AG04450 (cell line): ENCODE measurements at regions of chr4 and their contacts with region 1.

Region 1: GRCh38 chr4:24980064-24980690 is 50.6 kb downstream of the LGI2 start:
- DNase-seq: peak; percentile 29
- H3K4me3 ChIP-seq: no peak overlapping the region
- H3K27ac ChIP-seq: no peak overlapping the region
- H3K27me3 ChIP-seq: peaks cover 7% of the 10 kb centered on the region
- CTCF ChIP-seq: peak; percentile 93

Region 2: GRCh38 chr4:24472514-24473308 is 507.5 kb before region 1 on chr4:
- CTCF ChIA-PET with region 1: interaction called, 10 read pairs
- POLR2A ChIA-PET with region 1: interaction called, 5 read pairs
- DNase-seq: no peak
- H3K4me3 ChIP-seq: peak overlapping the region; percentile 66
- H3K27ac ChIP-seq: no peak overlapping the region
- H3K27me3 ChIP-seq: peaks cover 6% of the 10 kb centered on the region
- CTCF ChIP-seq: peak; percentile 70

Region 3: DNA sequence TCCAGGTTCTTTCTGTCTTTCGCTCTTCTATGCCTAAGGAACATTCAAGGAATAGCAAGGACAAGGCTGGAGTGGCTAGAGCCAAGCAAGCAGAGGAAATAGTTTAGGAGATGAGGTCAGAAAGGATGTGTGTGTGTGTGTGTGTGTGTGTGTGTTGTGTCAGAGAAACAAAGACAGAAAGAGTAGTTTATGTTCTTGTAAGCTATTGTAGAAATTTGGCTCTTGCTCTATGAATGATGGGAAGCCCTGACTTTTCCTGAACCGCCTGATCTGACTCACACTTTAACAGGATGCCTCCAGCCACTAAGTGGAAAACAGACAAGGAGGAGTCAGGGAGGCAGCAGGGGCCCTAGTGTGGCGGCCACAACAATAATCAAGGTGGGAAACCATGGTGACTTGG is 10.8 kb after region 1 on chr4:
- CTCF ChIA-PET with region 1: interaction called, 18 read pairs
- POLR2A ChIA-PET with region 1: no interaction called
- DNase-seq: no peak
- H3K4me3 ChIP-seq: no peak overlapping the region
- H3K27ac ChIP-seq: no peak overlapping the region
- H3K27me3 ChIP-seq: peaks cover 10% of the 10 kb centered on the region
- CTCF ChIP-seq: no peak

Region 4: DNA sequence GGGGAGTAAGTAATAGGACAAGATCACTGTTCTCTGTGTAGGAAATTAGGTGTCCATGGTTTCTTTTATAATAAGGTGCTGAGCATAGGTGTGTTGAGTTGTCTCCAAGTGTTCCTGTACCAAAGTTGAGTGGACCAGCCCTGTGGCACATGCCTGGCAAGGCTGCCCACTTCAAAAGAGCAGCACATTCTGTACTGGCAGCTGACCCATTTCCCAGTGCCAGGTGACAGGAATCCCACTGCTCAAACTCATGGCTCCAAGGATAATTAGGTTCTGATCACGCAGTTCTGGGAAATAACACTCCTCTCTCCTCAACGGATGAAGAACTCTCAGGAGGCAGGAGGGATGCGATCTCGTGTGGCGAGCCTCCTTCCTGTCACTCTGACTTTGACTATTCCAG is 63.4 kb after region 1 on chr4:
- CTCF ChIA-PET with region 1: no interaction called
- POLR2A ChIA-PET with region 1: no interaction called
- DNase-seq: no peak
- H3K4me3 ChIP-seq: no peak overlapping the region
- H3K27ac ChIP-seq: no peak overlapping the region
- H3K27me3 ChIP-seq: peaks cover 6% of the 10 kb centered on the region
- CTCF ChIP-seq: no peak